ENCODE measurements at regions of chr5 and their contacts with region 1.

Region 1: DNA sequence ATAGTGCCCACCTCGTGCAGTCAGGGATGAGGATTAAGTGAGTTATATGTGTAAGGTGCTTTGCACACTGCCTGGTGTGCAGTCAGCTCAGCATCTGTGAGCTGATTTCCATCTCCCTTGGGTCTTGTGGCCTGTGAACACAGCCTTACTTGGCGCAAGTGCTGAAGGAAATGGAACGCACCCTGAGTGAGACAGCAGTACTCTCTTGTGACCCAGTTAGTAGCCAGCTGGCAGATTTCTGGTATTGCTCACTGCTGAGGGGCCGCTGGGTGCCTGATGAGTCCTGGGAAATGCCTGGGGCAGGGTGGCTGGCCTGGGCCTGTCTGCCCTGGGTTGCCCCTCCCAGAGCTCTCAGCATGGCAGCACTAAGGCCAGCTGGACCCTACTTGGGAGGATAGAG is 90.9 kb upstream of the BOD1 start:
- DNase-seq: peak; percentile 84
- H3K4me3 ChIP-seq: no peak overlapping the region
- H3K27ac ChIP-seq: no peak overlapping the region
- H3K4me1 ChIP-seq: peaks cover 11% of the 10 kb centered on the region
- H3K27me3 ChIP-seq: no peaks in the 10 kb centered on the region
- CTCF ChIP-seq: no peak

Region 2: GRCh38 chr5:173659423-173659822 is 48.0 kb before region 1 on chr5:
- CTCF ChIA-PET with region 1: no interaction called
- dilution Hi-C with region 1: loop called (anchors 5 kb)
- in situ Hi-C with region 1: no loop called
- intact Hi-C with region 1: no loop called
- DNase-seq: no peak
- H3K4me3 ChIP-seq: no peak overlapping the region
- H3K27ac ChIP-seq: no peak overlapping the region
- H3K4me1 ChIP-seq: no peaks in the 10 kb centered on the region
- H3K27me3 ChIP-seq: no peaks in the 10 kb centered on the region
- CTCF ChIP-seq: no peak

Region 3: GRCh38 chr5:173696216-173697004 is 11.0 kb before region 1 on chr5:
- CTCF ChIA-PET with region 1: no interaction called
- dilution Hi-C with region 1: no loop called
- in situ Hi-C with region 1: no loop called
- intact Hi-C with region 1: loop called (anchors 1 kb)
- DNase-seq: no peak
- H3K4me3 ChIP-seq: no peak overlapping the region
- H3K27ac ChIP-seq: no peak overlapping the region
- H3K4me1 ChIP-seq: no peaks in the 10 kb centered on the region
- H3K27me3 ChIP-seq: no peaks in the 10 kb centered on the region
- CTCF ChIP-seq: no peak

Region 4: DNA sequence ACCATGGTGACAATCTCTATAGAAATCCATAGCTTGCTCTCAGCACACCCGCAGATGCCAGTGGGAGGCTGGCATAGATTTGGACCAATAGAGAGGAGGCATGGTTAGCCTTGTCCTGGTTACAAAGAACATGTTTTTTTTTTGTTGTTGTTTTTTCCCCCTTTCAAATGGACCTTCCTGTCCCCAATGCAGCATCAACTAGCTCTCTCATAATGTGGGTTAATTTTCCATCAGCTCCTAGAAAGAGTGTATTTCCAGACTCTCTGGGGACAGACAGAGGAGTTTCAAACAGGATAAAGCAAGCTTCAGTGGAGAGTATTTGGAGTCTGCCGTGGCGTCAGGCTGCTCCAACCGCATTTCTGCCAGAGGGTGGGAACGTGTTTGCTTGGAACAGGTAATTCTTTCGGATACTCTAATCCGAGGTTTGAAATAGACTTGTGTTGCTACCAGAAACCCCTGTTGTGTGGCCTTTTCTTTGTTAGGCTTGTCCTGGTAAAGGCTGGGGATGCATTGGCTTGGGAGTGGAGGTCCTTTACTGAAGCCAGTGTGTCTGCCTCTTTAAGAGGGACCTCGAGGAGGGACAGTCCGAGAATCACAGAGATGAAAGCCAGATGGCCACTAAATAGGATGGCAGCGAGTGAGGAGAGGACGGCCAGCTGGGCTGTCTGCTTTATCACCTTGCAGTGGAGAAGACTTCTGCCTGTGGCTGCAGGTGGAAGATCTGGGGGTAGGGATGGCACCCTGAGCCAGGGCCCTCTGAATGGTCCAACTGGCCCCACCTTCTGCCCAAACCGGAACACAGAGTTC is 50.2 kb after region 1 on chr5:
- CTCF ChIA-PET with region 1: no interaction called
- dilution Hi-C with region 1: loop called (anchors 5 kb)
- in situ Hi-C with region 1: no loop called
- intact Hi-C with region 1: no loop called
- DNase-seq: no peak
- H3K4me3 ChIP-seq: no peak overlapping the region
- H3K27ac ChIP-seq: no peak overlapping the region
- H3K4me1 ChIP-seq: no peaks in the 10 kb centered on the region
- H3K27me3 ChIP-seq: no peaks in the 10 kb centered on the region
- CTCF ChIP-seq: no peak

Region 5: DNA sequence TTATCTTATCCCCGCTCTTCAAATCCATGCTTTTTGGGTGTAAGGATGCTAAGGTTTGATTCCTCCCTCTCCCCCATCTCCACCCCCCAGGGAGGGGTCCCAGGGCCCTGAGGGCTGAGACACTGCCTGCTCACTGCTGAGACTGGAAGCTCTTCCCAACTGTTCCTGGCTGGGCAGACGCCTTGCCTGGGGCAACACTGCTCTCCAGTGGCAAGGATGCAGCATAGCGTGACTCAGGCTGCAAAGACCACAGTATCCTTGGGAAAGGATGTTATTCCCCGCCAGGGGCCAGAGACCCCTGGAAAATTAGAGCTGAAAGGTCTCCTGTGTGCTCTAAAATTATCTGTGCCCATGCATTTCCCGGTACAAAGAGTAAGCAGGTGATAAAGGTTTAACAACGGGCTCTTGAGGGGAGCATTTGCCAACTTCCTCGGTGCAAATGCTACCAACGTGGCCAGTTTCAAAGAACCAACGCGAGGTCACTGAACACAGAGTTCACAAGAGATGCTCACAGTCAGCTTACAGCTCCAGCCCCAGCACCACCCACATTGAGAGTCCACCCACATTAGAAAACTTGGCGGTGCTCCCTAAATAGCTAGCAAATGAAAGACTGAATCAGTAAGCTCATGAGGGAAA is 610.0 kb after region 1 on chr5:
- CTCF ChIA-PET with region 1: no interaction called
- dilution Hi-C with region 1: no loop called
- in situ Hi-C with region 1: no loop called
- intact Hi-C with region 1: loop called (anchors 5 kb)
- DNase-seq: peak; percentile 29
- H3K4me3 ChIP-seq: no peak overlapping the region
- H3K27ac ChIP-seq: no peak overlapping the region
- H3K4me1 ChIP-seq: no peaks in the 10 kb centered on the region
- H3K27me3 ChIP-seq: peaks cover 1% of the 10 kb centered on the region
- CTCF ChIP-seq: peak; percentile 63 to 85

Measured in mammary epithelial cell (primary cell).